PC-9 (cell line): ENCODE measurements at regions of chrX and their contacts with region 1.

Region 1: GRCh38 chrX:53317365-53318069 is 36.1 kb upstream of the IQSEC2 start:
- DNase-seq: peak in 1 of 2 experiments; percentile 69
- H3K4me3 ChIP-seq: no peak overlapping the region
- H3K27ac ChIP-seq: no peak overlapping the region
- H3K4me1 ChIP-seq: no peaks in the 10 kb centered on the region
- H3K27me3 ChIP-seq: no peaks in the 10 kb centered on the region; the same call in 1 of the 2 replicates
- CTCF ChIP-seq: peak; percentile 66

Region 2: DNA sequence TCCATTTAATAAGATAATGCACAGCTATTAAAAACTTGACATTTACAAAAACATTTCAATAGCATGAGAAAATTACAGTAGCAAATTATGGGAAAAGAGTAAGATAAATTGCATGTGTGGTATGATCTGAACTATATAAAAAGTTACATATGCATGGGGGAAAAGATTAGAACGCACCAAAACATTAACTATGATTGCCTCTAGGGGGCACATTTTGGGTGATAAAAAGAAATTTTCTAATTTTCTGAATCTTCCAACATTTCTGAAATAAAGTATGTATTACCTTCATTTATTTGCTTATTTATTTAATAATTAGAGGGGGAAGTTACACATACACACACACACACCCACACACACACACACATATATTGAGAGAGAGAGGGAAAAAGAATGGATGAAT is 72.9 kb before region 1 on chrX:
- CTCF ChIA-PET with region 1: no interaction called
- POLR2A ChIA-PET with region 1: no interaction called
- intact Hi-C with region 1: loop called (anchors 10 kb)
- DNase-seq: no peak
- H3K4me3 ChIP-seq: no peak overlapping the region
- H3K27ac ChIP-seq: no peak overlapping the region
- H3K4me1 ChIP-seq: no peaks in the 10 kb centered on the region
- H3K27me3 ChIP-seq: no peaks in the 10 kb centered on the region
- CTCF ChIP-seq: peak; percentile 38; the same call in 1 of the 2 replicates

Region 3: DNA sequence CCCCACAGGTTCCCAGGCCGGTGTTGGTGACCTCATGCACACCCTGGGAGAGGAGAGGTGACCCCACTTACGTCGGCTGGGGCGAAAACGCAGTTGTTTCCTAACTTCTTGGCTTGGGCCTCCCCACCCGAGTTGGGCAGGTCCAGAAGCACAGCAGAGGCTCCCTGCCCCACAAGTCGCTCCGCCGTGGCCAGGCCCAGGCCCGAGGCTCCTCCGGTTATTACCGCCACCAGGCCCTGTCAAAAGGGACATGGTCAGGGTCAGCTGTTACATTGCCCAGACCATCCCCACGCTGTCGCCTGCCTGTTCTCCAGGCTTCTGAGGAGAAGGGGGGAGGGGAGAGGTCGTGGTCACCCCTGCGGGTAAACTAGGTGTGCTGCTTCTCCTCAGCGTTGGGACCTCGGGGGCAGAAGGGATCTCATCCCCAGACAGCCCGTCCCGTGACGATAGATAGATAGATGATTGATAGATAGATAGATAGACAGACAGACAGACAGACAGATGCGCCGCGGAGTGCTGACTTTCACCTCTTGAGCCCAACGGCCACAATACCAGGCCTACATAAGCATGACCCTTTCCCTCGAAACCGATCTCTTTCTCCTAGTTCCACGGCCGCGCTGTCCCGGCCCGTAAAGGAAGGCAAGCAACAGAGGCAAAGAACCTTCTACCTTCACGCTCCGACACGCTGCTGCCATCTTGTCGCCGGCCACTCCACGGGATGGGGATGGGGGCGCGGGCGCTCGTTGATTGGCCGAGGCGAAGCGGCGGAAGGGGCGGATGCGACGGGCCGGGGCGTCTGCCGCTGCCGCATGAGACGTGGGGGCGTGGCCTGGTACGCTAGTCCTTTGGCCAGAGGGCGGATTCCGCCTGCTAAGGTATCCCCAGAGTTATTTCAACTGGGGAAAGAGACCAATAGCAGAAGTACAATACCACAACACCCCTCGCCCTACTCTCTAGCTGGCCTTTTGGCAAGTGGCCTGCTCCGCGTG is 116.4 kb after region 1 on chrX and contains the start of gene HSD17B10:
- CTCF ChIA-PET with region 1: no interaction called
- POLR2A ChIA-PET with region 1: no interaction called
- intact Hi-C with region 1: loop called (anchors 5 kb)
- DNase-seq: peak; percentile 65 to 93
- H3K4me3 ChIP-seq: peak within 1 kb of the TSS; percentile 59
- H3K27ac ChIP-seq: no peak within 1 kb of the TSS
- H3K4me1 ChIP-seq: no peaks in the 10 kb centered on the region
- H3K27me3 ChIP-seq: no peaks in the 10 kb centered on the region
- CTCF ChIP-seq: no peak
- total RNA-seq, gene HSD17B10: 204 and 234 TPM in 2 replicates

Region 4: DNA sequence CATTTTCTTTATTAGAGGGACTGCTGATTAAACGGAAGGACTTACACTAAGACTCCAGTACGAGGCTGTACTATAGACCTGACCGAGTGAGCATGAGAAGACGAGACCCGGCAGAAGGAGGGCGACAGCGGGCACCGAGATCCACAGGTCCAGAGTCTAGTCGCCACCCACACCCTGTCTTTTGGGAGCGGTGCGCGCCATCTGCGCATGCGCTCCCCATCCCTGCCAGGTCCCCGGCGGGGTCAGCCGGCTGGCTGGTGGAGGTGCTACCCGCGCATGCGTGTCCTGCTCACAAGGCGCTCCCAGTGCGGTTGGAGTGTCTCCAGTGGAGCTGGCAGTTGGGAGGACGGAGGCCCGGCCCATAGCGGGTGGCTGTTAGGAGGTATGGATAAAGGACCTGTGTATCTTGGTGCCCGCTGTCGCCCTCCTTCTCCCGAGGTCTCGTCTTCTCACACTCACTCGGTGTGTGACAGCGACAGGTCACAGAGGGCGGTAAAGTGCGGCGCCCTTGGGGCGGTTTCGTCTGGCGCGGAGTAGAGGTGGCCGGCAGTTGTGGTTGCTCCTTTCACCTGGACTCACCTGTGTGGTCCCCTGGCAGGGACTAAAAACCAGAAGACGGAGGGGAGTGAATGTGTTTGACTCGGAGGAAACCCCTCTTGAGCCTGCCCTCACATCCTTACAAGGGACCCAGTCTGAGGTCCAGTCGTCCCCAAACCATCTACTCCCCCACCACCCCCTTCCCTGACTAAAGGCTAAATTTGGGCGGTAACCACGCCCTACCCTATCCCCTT is 124.2 kb after region 1 on chrX:
- CTCF ChIA-PET with region 1: interaction called, 26 read pairs
- POLR2A ChIA-PET with region 1: no interaction called
- intact Hi-C with region 1: loop called (anchors 2 kb)
- DNase-seq: peak; percentile 45 to 94
- H3K4me3 ChIP-seq: peak overlapping the region; percentile 52; the same call in 1 of the 2 replicates
- H3K27ac ChIP-seq: peak overlapping the region; percentile 54; the same call in 1 of the 2 replicates
- H3K4me1 ChIP-seq: no peaks in the 10 kb centered on the region
- H3K27me3 ChIP-seq: no peaks in the 10 kb centered on the region
- CTCF ChIP-seq: no peak

Region 5: DNA sequence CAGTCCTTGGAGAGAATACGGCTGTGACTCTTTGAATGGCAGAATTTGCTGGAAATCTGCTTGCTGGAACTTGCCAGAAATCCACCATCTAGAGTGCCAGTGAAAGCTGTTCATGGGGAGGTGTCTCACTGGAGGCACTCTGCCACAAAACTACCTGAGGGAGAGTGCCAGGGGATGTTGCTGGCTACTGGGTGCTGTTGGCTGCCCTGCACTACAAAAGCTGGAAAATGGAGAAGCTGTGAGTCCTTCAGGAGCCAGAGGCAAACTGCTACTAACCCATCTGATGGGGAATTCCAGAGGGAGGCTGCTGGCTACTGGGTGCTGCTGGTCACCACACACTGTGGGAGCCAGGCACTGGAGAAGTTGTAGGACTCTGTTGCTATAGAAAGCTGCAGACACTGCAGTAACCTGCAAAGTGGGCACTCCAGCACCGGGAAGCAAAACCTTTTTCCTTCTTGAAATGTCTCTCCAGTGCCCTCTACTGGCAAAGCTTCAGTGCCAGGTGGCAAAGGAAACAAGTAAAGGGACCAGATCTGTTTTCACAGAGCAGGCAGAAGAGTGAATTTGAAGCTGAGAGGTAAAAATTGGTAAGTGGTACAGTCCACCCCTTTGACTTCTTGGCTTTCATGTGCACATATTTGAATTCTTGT is 164.4 kb after region 1 on chrX:
- CTCF ChIA-PET with region 1: interaction called, 6 read pairs
- POLR2A ChIA-PET with region 1: interaction called, 3 read pairs
- intact Hi-C with region 1: loop called (anchors 1 kb)
- DNase-seq: peak in 1 of 2 experiments; percentile 47
- H3K4me3 ChIP-seq: no peak overlapping the region
- H3K27ac ChIP-seq: no peak overlapping the region
- H3K4me1 ChIP-seq: no peaks in the 10 kb centered on the region
- H3K27me3 ChIP-seq: no peaks in the 10 kb centered on the region
- CTCF ChIP-seq: peak; percentile 58

Region 6: DNA sequence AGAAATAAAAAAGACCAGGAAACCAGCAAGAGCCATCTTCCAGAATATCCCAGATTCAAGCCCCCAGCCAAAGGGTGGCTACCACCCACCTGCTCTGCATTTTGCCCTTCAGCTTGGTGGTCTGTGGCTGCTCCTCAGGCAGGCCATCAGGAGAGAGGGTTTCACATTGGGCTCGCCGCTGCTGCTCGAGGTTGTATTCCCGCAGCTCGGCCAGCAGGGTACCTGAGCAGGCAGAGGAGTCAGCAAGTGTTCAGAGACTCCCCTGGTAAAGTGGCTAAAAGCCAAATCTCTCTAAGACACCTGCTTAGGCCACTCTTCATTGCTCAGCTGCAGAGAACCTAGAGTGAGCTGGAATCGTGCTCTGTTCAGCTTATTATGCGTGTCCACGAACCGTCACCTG is 227.4 kb after region 1 on chrX:
- CTCF ChIA-PET with region 1: interaction called, 14 read pairs
- POLR2A ChIA-PET with region 1: no interaction called
- intact Hi-C with region 1: no loop called
- DNase-seq: no peak
- H3K4me3 ChIP-seq: no peak overlapping the region
- H3K27ac ChIP-seq: no peak overlapping the region
- H3K4me1 ChIP-seq: no peaks in the 10 kb centered on the region
- H3K27me3 ChIP-seq: no peaks in the 10 kb centered on the region
- CTCF ChIP-seq: no peak